AG04450 (cell line): ENCODE measurements at regions of chr12 and their contacts with region 1.

Region 1: DNA sequence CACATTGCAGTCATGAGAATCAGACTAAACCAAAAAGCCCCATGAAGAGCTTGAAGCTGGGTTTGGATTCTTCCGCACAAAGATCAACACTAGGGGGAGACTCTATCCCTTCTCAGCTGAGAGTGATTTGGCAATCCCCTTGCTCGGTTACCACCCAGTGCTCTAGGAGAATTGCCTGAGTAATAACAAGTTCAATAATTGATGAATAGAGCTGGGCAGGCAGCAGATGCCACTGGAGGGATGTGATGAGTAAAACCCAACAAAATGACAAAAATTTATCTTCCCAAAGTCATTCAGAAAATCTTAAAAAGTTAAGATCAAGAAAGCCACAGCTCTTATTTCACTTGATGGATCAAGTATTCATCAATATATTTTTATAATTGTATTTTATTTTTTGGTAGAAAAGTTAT is 185.6 kb upstream of the ARID2 start:
- DNase-seq: peak; percentile 62
- H3K4me3 ChIP-seq: no peak overlapping the region
- H3K27ac ChIP-seq: no peak overlapping the region
- H3K27me3 ChIP-seq: no peaks in the 10 kb centered on the region
- CTCF ChIP-seq: peak; percentile 93

Region 2: GRCh38 chr12:45170456-45171042 is 373.4 kb before region 1 on chr12:
- CTCF ChIA-PET with region 1: interaction called, 12 read pairs
- POLR2A ChIA-PET with region 1: no interaction called
- DNase-seq: peak; percentile 53
- H3K4me3 ChIP-seq: no peak overlapping the region
- H3K27ac ChIP-seq: no peak overlapping the region
- H3K27me3 ChIP-seq: no peaks in the 10 kb centered on the region
- CTCF ChIP-seq: peak; percentile 96

Region 3: DNA sequence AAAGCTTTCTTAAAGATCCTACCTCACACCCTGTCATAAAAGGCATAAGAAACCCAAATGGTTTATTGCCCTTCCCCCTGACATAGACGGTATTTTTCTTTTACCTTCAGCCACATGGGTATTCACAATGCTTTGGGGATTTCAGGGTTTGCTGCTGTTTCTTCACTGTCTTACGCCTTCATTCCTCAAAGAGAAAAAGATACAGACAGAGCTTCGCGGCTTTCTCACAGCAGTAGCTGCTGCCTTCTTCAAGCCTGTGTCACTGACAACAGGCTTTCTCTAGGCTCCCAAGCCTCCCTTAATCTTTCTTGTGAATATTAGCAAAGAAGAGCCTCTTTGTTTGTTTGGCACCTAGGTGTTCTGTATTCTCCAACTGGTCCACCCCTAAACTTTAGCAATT is 11.8 kb before region 1 on chr12:
- CTCF ChIA-PET with region 1: interaction called, 20 read pairs
- POLR2A ChIA-PET with region 1: no interaction called
- DNase-seq: no peak
- H3K4me3 ChIP-seq: no peak overlapping the region
- H3K27ac ChIP-seq: no peak overlapping the region
- H3K27me3 ChIP-seq: peaks cover 3% of the 10 kb centered on the region
- CTCF ChIP-seq: no peak

Region 4: GRCh38 chr12:45568808-45569207 is 24.9 kb after region 1 on chr12:
- CTCF ChIA-PET with region 1: interaction called, 19 read pairs
- POLR2A ChIA-PET with region 1: no interaction called
- DNase-seq: no peak
- H3K4me3 ChIP-seq: no peak overlapping the region
- H3K27ac ChIP-seq: no peak overlapping the region
- H3K27me3 ChIP-seq: peaks cover 1% of the 10 kb centered on the region
- CTCF ChIP-seq: no peak

Region 5: GRCh38 chr12:45695015-45695414 is 151.1 kb after region 1 on chr12:
- CTCF ChIA-PET with region 1: interaction called, 10 read pairs
- POLR2A ChIA-PET with region 1: no interaction called
- DNase-seq: no peak
- H3K4me3 ChIP-seq: no peak overlapping the region
- H3K27ac ChIP-seq: no peak overlapping the region
- H3K27me3 ChIP-seq: no peaks in the 10 kb centered on the region
- CTCF ChIP-seq: no peak

Region 6: DNA sequence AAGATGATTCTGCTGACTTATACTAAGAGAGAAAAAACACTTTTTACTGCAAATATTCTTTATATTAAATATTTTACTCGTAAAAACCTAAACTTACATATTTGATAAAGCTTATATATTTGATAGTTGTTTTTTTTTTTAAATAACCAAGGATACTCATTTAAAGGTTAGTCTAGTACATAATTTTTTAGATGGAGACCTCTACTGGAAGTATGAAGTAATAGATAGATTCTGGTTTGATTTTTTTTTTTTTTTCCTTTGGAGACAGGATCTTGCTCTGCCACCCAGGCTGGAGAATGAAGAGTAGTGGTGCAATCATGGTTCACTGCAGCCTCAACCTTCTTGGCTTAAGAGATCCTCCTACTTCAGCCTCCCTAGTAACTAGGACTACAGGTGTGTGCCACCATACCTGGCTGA is 202.0 kb after region 1 on chr12:
- CTCF ChIA-PET with region 1: interaction called, 71 read pairs
- POLR2A ChIA-PET with region 1: no interaction called
- DNase-seq: no peak
- H3K4me3 ChIP-seq: no peak overlapping the region
- H3K27ac ChIP-seq: no peak overlapping the region
- H3K27me3 ChIP-seq: no peaks in the 10 kb centered on the region
- CTCF ChIP-seq: peak; percentile 32

Region 7: DNA sequence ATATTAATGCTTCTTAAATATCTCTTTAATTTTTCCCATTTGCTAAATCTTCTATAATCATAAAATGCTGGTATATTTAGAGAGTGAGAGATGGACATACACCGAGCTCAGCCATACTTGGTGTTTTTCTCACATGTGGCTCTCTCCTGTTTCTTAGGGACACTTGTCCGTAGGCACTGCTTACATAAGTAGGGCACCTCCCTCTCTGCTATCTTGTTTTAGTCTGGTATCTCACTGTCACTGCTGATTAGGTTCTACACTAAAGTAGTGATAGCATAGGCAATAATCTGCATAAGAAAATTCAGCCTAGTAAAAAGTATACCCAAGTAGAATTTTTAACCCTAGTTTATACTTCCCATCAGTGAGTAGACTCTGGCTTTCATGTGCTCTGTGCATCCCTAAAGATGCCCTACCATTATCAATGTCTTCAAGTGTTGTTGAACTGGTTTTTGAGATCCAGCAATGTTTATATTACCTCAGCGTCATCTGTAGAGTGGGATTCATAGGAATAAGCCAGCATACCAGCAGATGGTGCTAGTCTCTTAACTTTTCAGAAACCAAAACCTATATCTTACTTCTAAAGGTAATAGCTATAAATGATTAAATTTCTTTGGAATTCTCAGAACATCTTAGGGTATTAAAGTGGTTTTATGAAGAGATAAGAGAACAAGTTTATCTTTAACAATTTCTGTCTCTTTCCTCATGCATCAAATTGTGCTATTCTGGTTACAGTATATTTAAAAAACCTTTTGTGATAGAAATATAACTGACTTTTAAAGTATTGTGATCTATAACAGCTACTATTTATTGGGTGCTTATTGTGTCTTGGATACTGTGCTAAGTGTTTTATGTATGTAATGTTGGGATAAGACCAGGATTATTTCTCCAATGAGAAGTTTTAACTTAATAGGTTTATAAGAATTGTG is 218.5 kb after region 1 on chr12:
- CTCF ChIA-PET with region 1: interaction called, 18 read pairs
- POLR2A ChIA-PET with region 1: no interaction called
- DNase-seq: peak; percentile 27
- H3K4me3 ChIP-seq: no peak overlapping the region
- H3K27ac ChIP-seq: no peak overlapping the region
- H3K27me3 ChIP-seq: no peaks in the 10 kb centered on the region
- CTCF ChIP-seq: peak; percentile 86